Naive thymus-derived CD4-positive, alpha-beta T cell (primary cell): ENCODE measurements at regions of chr17 and their contacts with region 1.

Region 1: GRCh38 chr17:4908301-4908700 is 5.4 kb upstream of the CHRNE start:
- DNase-seq: peak in 3 of 9 donors; percentile 20 to 31 (median 27)
- ATAC-seq: no peak
- H3K4me3 ChIP-seq: peak overlapping the region; percentile 13
- H3K4me3 Mint-ChIP-seq: no peak overlapping the region
- H3K27ac ChIP-seq: peak overlapping the region; percentile 56
- H3K27ac Mint-ChIP-seq: no peak overlapping the region
- H3K4me1 ChIP-seq: peaks cover 10 to 25% of the 10 kb centered on the region in 2 donors
- H3K4me1 Mint-ChIP-seq: peaks cover 4 to 11% (median 6%) of the 10 kb centered on the region in 7 donors
- H3K27me3 ChIP-seq: no peaks in the 10 kb centered on the region
- H3K27me3 Mint-ChIP-seq: peaks cover 0 to 15% (median 0%) of the 10 kb centered on the region in 5 donors

Region 2: GRCh38 chr17:4939796-4940624 is 31.7 kb after region 1 on chr17 and contains the starts of genes RNF167 and SLC25A11:
- CTCF ChIA-PET with region 1: interaction called, 10 read pairs
- POLR2A ChIA-PET with region 1: interaction called, 25 read pairs
- intact Hi-C with region 1: loop called (anchors 1 to 2 kb)
- DNase-seq: peak; percentile 86 to 99 (median 98)
- ATAC-seq: peak; percentile 94
- H3K4me3 ChIP-seq: peak within 1 kb of the TSS; percentile 89
- H3K4me3 Mint-ChIP-seq: peak within 1 kb of the TSS; percentile 92 to 100 (median 98)
- H3K27ac ChIP-seq: peak within 1 kb of the TSS; percentile 89
- H3K27ac Mint-ChIP-seq: peak within 1 kb of the TSS; percentile 89 to 98 (median 95)
- H3K4me1 ChIP-seq: peaks cover 47 to 48% of the 10 kb centered on the region in 2 donors
- H3K4me1 Mint-ChIP-seq: peaks cover 52 to 77% (median 66%) of the 10 kb centered on the region in 7 donors
- H3K27me3 ChIP-seq: no peaks in the 10 kb centered on the region
- H3K27me3 Mint-ChIP-seq: no peaks in the 10 kb centered on the region
- total RNA-seq, gene RNF167: 97.3 to 248 (median 148) TPM
- total RNA-seq, gene SLC25A11: 27.0 to 82.6 (median 44.1) TPM

Region 3: DNA sequence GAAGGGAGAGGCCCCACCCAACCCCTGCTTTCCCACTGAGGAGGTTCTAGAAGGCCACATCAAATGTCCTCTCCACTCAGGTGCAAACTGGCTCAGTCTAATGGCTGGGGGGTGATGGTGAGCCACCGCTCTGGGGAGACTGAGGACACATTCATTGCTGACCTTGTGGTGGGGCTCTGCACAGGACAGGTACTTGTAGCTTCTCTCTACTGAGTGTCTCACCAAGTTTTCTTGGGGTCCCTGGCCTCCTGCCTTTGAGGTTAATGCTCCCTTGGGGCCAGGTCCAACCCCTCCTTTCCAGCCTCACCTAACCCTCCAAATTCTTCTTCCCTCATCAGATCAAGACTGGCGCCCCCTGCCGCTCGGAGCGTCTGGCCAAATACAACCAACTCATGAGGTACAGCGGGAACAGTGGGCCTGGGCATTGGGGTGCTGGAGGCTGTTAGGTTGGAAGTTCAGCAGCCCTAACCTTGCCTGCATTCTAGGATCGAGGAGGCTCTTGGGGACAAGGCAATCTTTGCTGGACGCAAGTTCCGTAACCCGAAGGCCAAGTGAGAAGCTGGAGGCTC is 48.3 kb after region 1 on chr17:
- CTCF ChIA-PET with region 1: interaction called, 6 read pairs
- POLR2A ChIA-PET with region 1: interaction called, 6 read pairs
- intact Hi-C with region 1: loop called in 1 of 2 experiments (anchors 1 kb)
- DNase-seq: peak in 3 of 9 donors; percentile 9 to 47 (median 36)
- ATAC-seq: no peak
- H3K4me3 ChIP-seq: no peak overlapping the region
- H3K4me3 Mint-ChIP-seq: no peak overlapping the region
- H3K27ac ChIP-seq: no peak overlapping the region
- H3K27ac Mint-ChIP-seq: peak overlapping the region in 1 of 9 donors; percentile 67
- H3K4me1 ChIP-seq: peaks cover 0 to 7% of the 10 kb centered on the region in 2 donors
- H3K4me1 Mint-ChIP-seq: peaks cover 0 to 20% (median 13%) of the 10 kb centered on the region in 7 donors
- H3K27me3 ChIP-seq: no peaks in the 10 kb centered on the region
- H3K27me3 Mint-ChIP-seq: no peaks in the 10 kb centered on the region

Region 4: GRCh38 chr17:4986951-4987766 is 78.9 kb after region 1 on chr17 and contains the start of gene CAMTA2:
- CTCF ChIA-PET with region 1: interaction called, 5 read pairs
- POLR2A ChIA-PET with region 1: interaction called, 6 read pairs
- intact Hi-C with region 1: loop called in 1 of 2 experiments (anchors 1 kb)
- DNase-seq: peak; percentile 70 to 87 (median 80)
- ATAC-seq: peak; percentile 93
- H3K4me3 ChIP-seq: peak within 1 kb of the TSS; percentile 91
- H3K4me3 Mint-ChIP-seq: peak within 1 kb of the TSS; percentile 86 to 94 (median 91)
- H3K27ac ChIP-seq: peak within 1 kb of the TSS; percentile 99
- H3K27ac Mint-ChIP-seq: peak within 1 kb of the TSS; percentile 87 to 95 (median 93)
- H3K4me1 ChIP-seq: peaks cover 10 to 23% of the 10 kb centered on the region in 2 donors
- H3K4me1 Mint-ChIP-seq: peaks cover 29 to 51% (median 46%) of the 10 kb centered on the region in 7 donors
- H3K27me3 ChIP-seq: no peaks in the 10 kb centered on the region
- H3K27me3 Mint-ChIP-seq: no peaks in the 10 kb centered on the region
- total RNA-seq, gene CAMTA2: 55.2 to 90.0 (median 64.1) TPM

Region 5: DNA sequence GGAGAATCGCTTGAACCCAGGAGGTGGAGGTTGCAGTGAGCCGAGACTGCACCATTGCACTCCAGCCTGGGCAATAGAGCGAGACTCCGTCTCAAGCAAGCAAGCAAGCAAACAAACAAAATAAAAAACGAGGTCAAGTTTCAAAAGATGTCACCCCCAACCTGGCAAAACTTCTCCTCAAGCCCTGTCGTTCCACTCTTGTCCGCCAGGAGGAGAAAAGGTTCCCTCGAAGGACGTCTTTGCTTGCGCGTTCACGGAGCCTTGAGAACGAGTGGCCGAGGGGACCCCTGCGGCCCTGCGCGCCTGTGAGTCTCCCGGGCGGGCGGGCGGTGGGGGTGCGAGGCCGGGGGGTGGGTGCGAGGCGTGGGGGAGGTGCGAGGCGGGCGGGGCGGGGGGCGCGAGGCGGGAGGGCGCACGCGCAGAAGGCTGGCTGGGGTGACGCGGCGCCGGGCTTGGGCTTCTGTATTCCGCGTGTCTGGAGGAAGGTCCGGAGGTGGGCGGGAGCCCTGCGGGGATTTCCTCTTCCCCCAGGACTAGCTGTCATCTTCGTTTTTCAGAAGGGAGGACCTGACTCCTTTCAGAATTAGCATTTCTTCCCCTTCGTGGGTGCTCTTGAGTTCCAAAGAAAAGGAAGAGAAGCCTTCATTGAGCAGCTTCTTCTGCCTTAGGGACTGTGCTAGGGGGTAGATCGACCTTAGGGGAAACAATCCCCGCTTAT is 123.2 kb after region 1 on chr17:
- CTCF ChIA-PET with region 1: interaction called, 3 read pairs
- POLR2A ChIA-PET with region 1: no interaction called
- intact Hi-C with region 1: loop called in 1 of 2 experiments (anchors 1 kb)
- DNase-seq: peak; percentile 61 to 85 (median 78)
- ATAC-seq: peak; percentile 90
- H3K4me3 ChIP-seq: peak overlapping the region; percentile 56
- H3K4me3 Mint-ChIP-seq: peak overlapping the region; percentile 79 to 89 (median 86)
- H3K27ac ChIP-seq: peak overlapping the region; percentile 79
- H3K27ac Mint-ChIP-seq: peak overlapping the region; percentile 89 to 95 (median 92)
- H3K4me1 ChIP-seq: peaks cover 10 to 17% of the 10 kb centered on the region in 2 donors
- H3K4me1 Mint-ChIP-seq: peaks cover 5 to 29% (median 23%) of the 10 kb centered on the region in 7 donors
- H3K27me3 ChIP-seq: no peaks in the 10 kb centered on the region
- H3K27me3 Mint-ChIP-seq: peaks cover 0 to 4% (median 0%) of the 10 kb centered on the region in 5 donors